Panc1 (cell line): ENCODE measurements at regions of chr11 and their contacts with region 1.

Region 1: DNA sequence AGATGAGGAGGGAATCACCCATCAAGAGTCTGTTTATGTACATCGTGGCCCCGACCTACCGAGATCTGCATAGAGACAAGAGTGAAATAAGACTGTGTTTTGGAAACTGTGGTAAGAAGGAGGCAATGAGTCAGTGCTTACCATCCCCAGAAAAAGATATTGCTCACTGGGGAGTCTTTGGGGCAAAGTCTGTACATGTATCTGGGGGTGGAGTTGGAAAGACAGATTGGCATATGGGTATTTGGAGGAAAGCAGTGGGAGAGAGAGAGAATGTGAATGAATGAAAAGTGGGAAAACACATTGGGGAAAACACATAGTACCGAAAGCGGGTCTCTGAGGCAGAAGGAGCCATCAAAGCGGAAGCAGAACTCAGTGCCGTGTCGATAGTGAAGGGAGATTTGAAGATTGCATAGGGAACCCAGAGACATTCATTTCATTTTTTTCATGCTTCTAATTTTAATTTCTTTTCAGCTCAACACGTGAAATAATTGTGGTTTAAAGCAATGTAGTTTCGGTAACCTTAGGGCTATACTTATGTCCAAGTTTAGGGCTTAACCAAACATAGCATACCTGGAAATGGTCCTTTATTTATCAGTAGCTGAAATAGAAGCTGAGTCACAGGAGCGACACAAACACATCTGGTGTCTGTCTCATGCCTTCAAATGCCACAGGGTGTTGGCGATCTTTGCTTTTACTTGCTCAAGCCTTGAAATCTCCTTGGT is 98.6 kb upstream of the CD44 start:
- DNase-seq: peak; percentile 72
- ATAC-seq: peak; percentile 91
- H3K4me3 ChIP-seq: peak overlapping the region; percentile 35 to 58
- H3K27ac ChIP-seq: peak overlapping the region; percentile 95
- H3K4me1 ChIP-seq: peaks cover 35% of the 10 kb centered on the region
- H3K27me3 ChIP-seq: no peaks in the 10 kb centered on the region
- CTCF ChIP-seq: no peak

Region 2: DNA sequence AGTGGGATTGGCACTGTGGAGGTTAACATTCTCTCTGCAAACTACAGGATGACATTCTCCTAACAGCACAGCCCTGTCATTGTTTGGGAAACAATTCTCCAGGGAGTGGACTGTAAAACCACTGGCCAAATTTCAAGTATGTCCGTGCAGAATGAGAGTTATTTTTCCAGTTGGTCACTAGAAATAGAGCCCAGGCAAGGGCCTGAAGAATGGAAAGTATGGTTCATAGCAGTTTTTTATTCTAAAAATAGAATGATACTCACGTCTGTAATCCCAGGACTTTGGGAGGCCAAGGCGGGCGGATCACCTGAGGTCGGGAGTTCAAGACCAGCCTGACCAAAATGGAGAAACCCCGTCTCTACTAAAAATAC is 59.6 kb after region 1 on chr11:
- CTCF ChIA-PET with region 1: no interaction called
- POLR2A ChIA-PET with region 1: interaction called, 10 read pairs
- in situ Hi-C with region 1: no loop called
- intact Hi-C with region 1: no loop called
- DNase-seq: no peak
- ATAC-seq: peak; percentile 57
- H3K4me3 ChIP-seq: no peak overlapping the region
- H3K27ac ChIP-seq: peak overlapping the region; percentile 88
- H3K4me1 ChIP-seq: peaks cover 27% of the 10 kb centered on the region
- H3K27me3 ChIP-seq: no peaks in the 10 kb centered on the region
- CTCF ChIP-seq: no peak